ENCODE measurements at regions of chr16 and their contacts with region 1.

Region 1: GRCh38 chr16:23081675-23082119 is 67.6 kb downstream of the USP31 start:
- DNase-seq: no peak
- H3K4me3 ChIP-seq: no peak overlapping the region
- H3K27ac ChIP-seq: no peak overlapping the region
- H3K4me1 ChIP-seq: no peaks in the 10 kb centered on the region
- H3K27me3 ChIP-seq: no peaks in the 10 kb centered on the region
- CTCF ChIP-seq: no peak
- EP300 ChIP-seq: no peak
- POLR2A ChIP-seq: no peak

Region 2: GRCh38 chr16:23114131-23114904 is 32.6 kb after region 1 on chr16:
- intact Hi-C with region 1: loop called (anchors 5 kb)
- DNase-seq: no peak
- H3K4me3 ChIP-seq: no peak overlapping the region
- H3K27ac ChIP-seq: no peak overlapping the region
- H3K4me1 ChIP-seq: peaks cover 0 to 26% (median 17%) of the 10 kb centered on the region in 4 donors
- H3K27me3 ChIP-seq: no peaks in the 10 kb centered on the region
- CTCF ChIP-seq: no peak
- EP300 ChIP-seq: no peak
- POLR2A ChIP-seq: no peak

Region 3: GRCh38 chr16:23155439-23156049 is 73.8 kb after region 1 on chr16:
- intact Hi-C with region 1: loop called (anchors 5 kb)
- DNase-seq: no peak
- H3K4me3 ChIP-seq: no peak overlapping the region
- H3K27ac ChIP-seq: no peak overlapping the region
- H3K4me1 ChIP-seq: no peaks in the 10 kb centered on the region
- H3K27me3 ChIP-seq: no peaks in the 10 kb centered on the region
- CTCF ChIP-seq: no peak
- EP300 ChIP-seq: no peak
- POLR2A ChIP-seq: no peak

Measured in sigmoid colon (tissue), 7 donors.